K562 (cell line): ENCODE measurements at regions of chr7 and their contacts with region 1.

Region 1: DNA sequence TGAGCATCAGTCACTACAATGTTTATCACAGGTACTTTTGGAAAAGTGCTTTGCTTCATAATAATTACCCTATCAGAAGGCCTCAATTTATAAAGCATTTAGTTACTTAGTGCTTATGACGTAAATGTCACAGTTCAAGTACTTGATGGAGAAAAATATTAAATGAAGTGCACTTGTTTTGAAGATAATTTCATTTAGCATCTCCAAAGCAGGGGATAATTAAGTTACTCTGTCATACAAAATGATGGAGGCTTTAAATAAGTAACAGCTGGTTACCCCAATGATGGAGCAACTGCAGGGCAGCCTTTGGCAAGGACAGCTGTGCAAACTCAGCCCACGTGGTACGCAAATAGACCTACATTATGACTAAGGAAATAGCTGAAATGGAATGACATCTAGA is 768.8 kb downstream of the GRM8 start:
- DNase-seq: no peak
- ATAC-seq: no peak
- H3K4me3 ChIP-seq: no peak overlapping the region
- H3K27ac ChIP-seq: no peak overlapping the region
- H3K4me1 ChIP-seq: no peaks in the 10 kb centered on the region
- H3K27me3 ChIP-seq: no peaks in the 10 kb centered on the region
- CTCF ChIP-seq: no peak
- EP300 ChIP-seq: no peak
- POLR2A ChIP-seq: no peak
- RAD21 ChIP-seq: no peak

Region 2: DNA sequence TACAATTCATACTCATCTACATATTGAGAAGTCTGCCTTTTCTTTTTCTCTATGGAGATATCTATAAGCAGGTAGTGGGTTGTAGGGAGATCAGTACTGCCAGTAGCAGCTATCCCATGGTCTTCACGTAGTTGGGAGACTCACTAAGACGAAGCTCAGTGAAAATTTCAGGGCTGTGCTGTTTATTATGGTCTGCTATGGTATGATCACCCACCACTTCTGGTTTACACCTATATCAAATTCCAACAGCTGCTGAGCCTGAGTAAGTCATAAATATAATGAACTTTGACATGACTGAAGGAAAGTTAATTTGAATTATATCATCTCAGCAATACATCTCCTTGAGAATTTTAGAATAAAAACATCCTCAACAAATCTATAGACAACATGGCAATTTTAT is 27.1 kb after region 1 on chr7:
- CTCF ChIA-PET with region 1: no interaction called
- POLR2A ChIA-PET with region 1: no interaction called
- in situ Hi-C with region 1: no loop called
- intact Hi-C with region 1: loop called (anchors 1 kb)
- DNase-seq: no peak
- ATAC-seq: no peak
- H3K4me3 ChIP-seq: no peak overlapping the region
- H3K27ac ChIP-seq: no peak overlapping the region
- H3K4me1 ChIP-seq: no peaks in the 10 kb centered on the region
- H3K27me3 ChIP-seq: no peaks in the 10 kb centered on the region
- CTCF ChIP-seq: no peak
- EP300 ChIP-seq: no peak
- POLR2A ChIP-seq: no peak
- RAD21 ChIP-seq: no peak